ENCODE measurements at regions of chr11 and their contacts with region 1.

Region 1: GRCh38 chr11:10534316-10534715 is 6.7 kb downstream of the RNF141 start:
- DNase-seq: no peak
- ATAC-seq: no peak
- H3K4me3 ChIP-seq: no peak overlapping the region
- H3K27ac ChIP-seq: no peak overlapping the region
- H3K4me1 ChIP-seq: peaks cover 0 to 6% of the 10 kb centered on the region in 2 experiments; a peak in 2 of 5 replicates
- H3K27me3 ChIP-seq: no peaks in the 10 kb centered on the region
- CTCF ChIP-seq: no peak
- EP300 ChIP-seq: no peak
- POLR2A ChIP-seq: no peak
- RAD21 ChIP-seq: no peak

Region 2: GRCh38 chr11:10413268-10413667 is 121.0 kb before region 1 on chr11:
- CTCF ChIA-PET with region 1: no interaction called
- POLR2A ChIA-PET with region 1: no interaction called
- in situ Hi-C with region 1: no loop called
- intact Hi-C with region 1: no loop called
- DNase-seq: peak in 1 of 4 experiments; percentile 61
- ATAC-seq: peak; percentile 83
- H3K4me3 ChIP-seq: no peak overlapping the region
- H3K27ac ChIP-seq: no peak overlapping the region
- H3K4me1 ChIP-seq: peaks cover 12 to 19% of the 10 kb centered on the region in 2 experiments; a peak in 2 of 5 replicates
- H3K27me3 ChIP-seq: no peaks in the 10 kb centered on the region
- CTCF ChIP-seq: peak; percentile 45 to 66 (median 56); a peak in 5 of 6 replicates
- EP300 ChIP-seq: no peak
- POLR2A ChIP-seq: no peak
- RAD21 ChIP-seq: peak; percentile 80 to 93

Region 3: GRCh38 chr11:10519630-10520029 is 14.7 kb before region 1 on chr11:
- CTCF ChIA-PET with region 1: no interaction called
- POLR2A ChIA-PET with region 1: interaction called, 12 read pairs
- in situ Hi-C with region 1: no loop called
- intact Hi-C with region 1: no loop called
- DNase-seq: no peak
- ATAC-seq: no peak; the same call in 2 of the 3 replicates
- H3K4me3 ChIP-seq: no peak overlapping the region
- H3K27ac ChIP-seq: no peak overlapping the region
- H3K4me1 ChIP-seq: 0 out of 5 replicates have a peak, but pooled peaks cover 0 to 4% of the 10 kb centered on the region in 2 experiments
- H3K27me3 ChIP-seq: no peaks in the 10 kb centered on the region
- CTCF ChIP-seq: no peak
- EP300 ChIP-seq: no peak
- POLR2A ChIP-seq: no peak
- RAD21 ChIP-seq: no peak

Region 4: DNA sequence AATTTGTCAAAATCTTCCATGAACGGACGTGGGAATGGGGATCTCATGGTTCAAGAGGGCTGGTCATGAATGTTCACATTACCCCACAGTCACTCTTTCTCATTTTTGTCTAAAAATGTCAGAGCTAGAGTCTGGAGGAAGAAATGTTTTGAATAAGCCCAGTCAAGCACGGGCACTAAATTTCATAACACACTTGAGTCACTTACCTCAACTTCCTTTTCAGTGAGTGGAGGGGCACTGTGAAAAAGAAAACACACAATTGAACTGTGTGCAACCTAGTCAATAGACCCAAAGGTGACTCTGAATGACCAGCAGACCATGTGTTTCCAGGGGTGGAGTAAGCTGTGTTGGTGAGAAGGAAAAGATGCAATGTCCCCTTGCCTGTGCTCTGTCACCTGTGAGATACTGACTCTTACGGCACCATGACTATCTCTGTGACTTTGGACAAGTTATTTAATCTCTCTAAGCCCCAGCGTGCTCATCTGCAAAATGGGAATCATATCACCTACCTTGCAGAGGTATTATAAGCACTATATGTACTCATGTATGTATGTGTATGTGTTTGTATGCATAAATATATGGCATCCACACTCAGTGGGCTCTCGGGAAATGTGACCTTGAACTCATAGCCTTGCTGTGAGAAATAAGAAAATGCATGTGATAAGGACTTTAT is 72.4 kb after region 1 on chr11:
- CTCF ChIA-PET with region 1: no interaction called
- POLR2A ChIA-PET with region 1: no interaction called
- in situ Hi-C with region 1: no loop called
- intact Hi-C with region 1: no loop called
- DNase-seq: no peak
- ATAC-seq: no peak
- H3K4me3 ChIP-seq: no peak overlapping the region
- H3K27ac ChIP-seq: 0 out of 3 replicates have a peak overlapping the region, but pooled peaks have one; percentile 4
- H3K4me1 ChIP-seq: peaks cover 9 to 14% of the 10 kb centered on the region in 2 experiments
- H3K27me3 ChIP-seq: no peaks in the 10 kb centered on the region; a peak in 1 of 5 replicates
- CTCF ChIP-seq: no peak
- EP300 ChIP-seq: no peak
- POLR2A ChIP-seq: no peak
- RAD21 ChIP-seq: no peak